ENCODE measurements at regions of chr17 and their contacts with region 1.

Region 1: GRCh38 chr17:49399995-49400394 is 14.7 kb downstream of the PHB1 start:
- DNase-seq: no peak
- H3K4me3 ChIP-seq: no peak overlapping the region
- H3K27ac ChIP-seq: no peak overlapping the region
- H3K4me1 ChIP-seq: peaks cover 0 to 11% (median 0%) of the 10 kb centered on the region in 4 donors
- H3K27me3 ChIP-seq: no peaks in the 10 kb centered on the region
- CTCF ChIP-seq: no peak
- EP300 ChIP-seq: no peak
- POLR2A ChIP-seq: no peak

Region 2: DNA sequence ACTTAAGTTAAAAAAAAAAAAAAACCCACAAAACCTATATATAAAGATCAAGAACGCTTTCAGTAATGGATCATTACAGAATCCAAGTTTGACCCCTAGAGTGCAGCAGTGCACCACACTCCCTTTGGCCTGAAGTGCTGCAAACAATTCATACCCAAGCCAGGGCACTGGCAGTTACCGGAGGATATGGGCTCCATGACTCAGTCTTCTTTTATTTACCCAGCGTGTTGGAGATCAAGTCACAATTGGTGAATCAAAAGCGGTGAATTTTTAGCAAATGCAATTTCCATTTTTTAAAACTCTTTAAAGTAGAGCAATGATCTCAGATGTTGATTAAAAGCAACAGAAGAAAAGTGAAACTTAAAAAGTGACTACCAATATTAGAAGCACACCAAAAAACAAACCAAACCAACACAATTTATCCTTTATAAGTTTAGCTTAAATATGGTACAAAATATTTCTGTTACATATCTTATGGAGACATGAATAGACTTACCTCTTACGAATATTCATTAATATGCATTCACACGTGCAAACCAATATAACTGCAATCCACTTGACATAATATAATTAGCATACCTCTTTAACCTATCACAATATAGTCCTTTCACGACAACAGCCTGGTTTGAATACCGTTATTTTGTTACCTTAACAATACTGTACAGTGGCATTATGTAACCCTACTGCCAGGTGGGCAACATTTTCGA is 84.3 kb before region 1 on chr17:
- intact Hi-C with region 1: loop called (anchors 5 kb)
- DNase-seq: peak; percentile 78 to 92
- H3K4me3 ChIP-seq: no peak overlapping the region
- H3K27ac ChIP-seq: peak overlapping the region in 1 of 5 donors; percentile 10
- H3K4me1 ChIP-seq: peaks cover 9 to 36% (median 19%) of the 10 kb centered on the region in 4 donors
- H3K27me3 ChIP-seq: no peaks in the 10 kb centered on the region
- CTCF ChIP-seq: peak in 5 of 7 experiments; percentile 47 to 92 (median 73)
- EP300 ChIP-seq: no peak
- POLR2A ChIP-seq: no peak

Region 3: DNA sequence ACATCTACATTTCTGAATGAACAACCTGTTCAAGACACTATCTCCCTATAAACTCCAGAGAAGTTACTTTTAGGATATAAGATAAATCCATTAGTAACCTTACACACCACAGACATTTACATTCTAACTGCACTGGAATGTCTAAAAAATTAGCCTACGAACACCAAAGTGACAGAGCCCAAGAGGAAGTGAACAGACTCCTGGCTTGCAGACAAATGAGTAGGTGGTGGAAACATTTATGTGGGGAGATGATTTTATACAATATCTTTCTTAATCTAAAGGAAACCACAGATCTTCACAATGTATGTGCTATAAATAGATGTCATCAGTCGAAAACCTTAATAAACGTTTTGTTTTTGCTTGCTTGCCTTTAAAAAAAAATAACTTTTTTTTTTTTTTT is 56.7 kb before region 1 on chr17:
- intact Hi-C with region 1: no loop called
- DNase-seq: peak in 1 of 2 donors; percentile 27
- H3K4me3 ChIP-seq: no peak overlapping the region
- H3K27ac ChIP-seq: peak overlapping the region in 1 of 5 donors; percentile 19
- H3K4me1 ChIP-seq: peaks cover 13 to 80% (median 48%) of the 10 kb centered on the region in 4 donors
- H3K27me3 ChIP-seq: no peaks in the 10 kb centered on the region
- CTCF ChIP-seq: no peak
- EP300 ChIP-seq: no peak
- POLR2A ChIP-seq: no peak